ENCODE measurements at regions of chr2 and their contacts with region 1.

Region 1: GRCh38 chr2:222797261-222797660 is 63.6 kb upstream of the ACSL3 start:
- DNase-seq: no peak
- H3K4me3 ChIP-seq: no peak overlapping the region
- H3K4me3 Mint-ChIP-seq: no peak overlapping the region
- H3K27ac ChIP-seq: peak overlapping the region in 1 of 2 donors; percentile 82
- H3K27ac Mint-ChIP-seq: peak overlapping the region in 6 of 7 donors; percentile 63 to 97 (median 84)
- H3K4me1 ChIP-seq: peaks cover 21 to 30% of the 10 kb centered on the region in 2 donors
- H3K4me1 Mint-ChIP-seq: peaks cover 27% of the 10 kb centered on the region
- H3K27me3 ChIP-seq: no peaks in the 10 kb centered on the region
- H3K27me3 Mint-ChIP-seq: peaks cover 0 to 1% (median 0%) of the 10 kb centered on the region in 3 donors
- CTCF ChIP-seq: peak; percentile 32

Region 2: GRCh38 chr2:222641336-222641735 is 155.9 kb before region 1 on chr2:
- intact Hi-C with region 1: no loop called
- DNase-seq: no peak
- H3K4me3 ChIP-seq: no peak overlapping the region
- H3K4me3 Mint-ChIP-seq: no peak overlapping the region
- H3K27ac ChIP-seq: no peak overlapping the region
- H3K27ac Mint-ChIP-seq: peak overlapping the region in 1 of 7 donors; percentile 30
- H3K4me1 ChIP-seq: no peaks in the 10 kb centered on the region
- H3K4me1 Mint-ChIP-seq: peaks cover 3% of the 10 kb centered on the region
- H3K27me3 ChIP-seq: no peaks in the 10 kb centered on the region
- H3K27me3 Mint-ChIP-seq: no peaks in the 10 kb centered on the region
- CTCF ChIP-seq: no peak

Region 3: DNA sequence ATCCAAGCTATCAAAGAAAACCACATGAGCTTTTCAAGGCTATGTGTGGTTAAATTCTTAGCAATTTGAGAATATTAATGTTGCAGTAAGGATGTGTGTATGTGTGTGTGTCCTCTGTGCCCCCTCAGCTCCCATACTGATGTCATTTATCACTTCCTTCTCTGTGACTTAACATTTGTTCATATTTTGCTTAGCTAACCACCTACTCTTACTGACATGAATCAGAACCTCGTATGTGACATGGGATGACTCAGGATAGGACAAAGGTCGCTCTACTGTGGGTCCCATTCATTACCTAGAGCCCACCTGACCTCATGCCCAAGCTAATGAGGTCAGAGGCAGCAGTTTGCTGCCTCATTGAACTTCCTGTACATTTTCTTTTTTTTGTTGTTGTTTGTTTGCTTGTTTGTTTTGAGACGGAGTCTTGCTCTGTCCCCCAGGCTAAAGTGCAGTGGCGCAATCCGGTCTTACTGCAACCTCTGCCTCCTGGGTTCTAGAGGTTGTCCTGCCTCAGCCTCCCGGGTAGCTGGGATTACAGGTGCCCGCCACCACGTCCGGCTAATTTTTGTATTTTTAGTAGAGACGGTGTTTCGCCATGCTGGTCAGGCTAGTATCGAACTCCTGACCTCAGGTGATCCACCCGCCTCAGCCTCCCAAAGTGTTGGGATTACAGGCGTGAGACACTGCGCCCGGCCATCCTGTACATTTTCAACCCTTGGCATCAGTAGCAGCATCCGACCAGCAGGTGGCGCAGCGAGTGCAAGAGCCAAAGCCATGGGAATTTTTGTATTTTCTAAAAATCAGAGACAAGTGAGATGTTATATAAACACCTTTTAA is 89.4 kb before region 1 on chr2:
- intact Hi-C with region 1: loop called (anchors 5 to 10 kb)
- DNase-seq: peak; percentile 81 to 96 (median 87)
- H3K4me3 ChIP-seq: no peak overlapping the region
- H3K4me3 Mint-ChIP-seq: peak overlapping the region; percentile 39 to 62
- H3K27ac ChIP-seq: peak overlapping the region in 1 of 2 donors; percentile 29
- H3K27ac Mint-ChIP-seq: peak overlapping the region; percentile 23 to 92 (median 91)
- H3K4me1 ChIP-seq: peaks cover 19 to 21% of the 10 kb centered on the region in 2 donors
- H3K4me1 Mint-ChIP-seq: peaks cover 35% of the 10 kb centered on the region
- H3K27me3 ChIP-seq: no peaks in the 10 kb centered on the region
- H3K27me3 Mint-ChIP-seq: peaks cover under 1 to 1% (median under 1%) of the 10 kb centered on the region in 3 donors
- CTCF ChIP-seq: peak; percentile 93

Region 4: GRCh38 chr2:222730366-222730999 is 66.8 kb before region 1 on chr2:
- intact Hi-C with region 1: loop called in 1 of 2 experiments (anchors 10 kb)
- DNase-seq: peak; percentile 34 to 55 (median 35)
- H3K4me3 ChIP-seq: peak overlapping the region in 1 of 3 experiments; percentile 7
- H3K4me3 Mint-ChIP-seq: peak overlapping the region in 1 of 2 donors; percentile 69
- H3K27ac ChIP-seq: peak overlapping the region; percentile 48 to 69
- H3K27ac Mint-ChIP-seq: peak overlapping the region in 6 of 7 donors; percentile 21 to 82 (median 68)
- H3K4me1 ChIP-seq: peaks cover 16 to 27% of the 10 kb centered on the region in 2 donors
- H3K4me1 Mint-ChIP-seq: peaks cover 25% of the 10 kb centered on the region
- H3K27me3 ChIP-seq: no peaks in the 10 kb centered on the region
- H3K27me3 Mint-ChIP-seq: peaks cover 0 to 3% (median 0%) of the 10 kb centered on the region in 3 donors
- CTCF ChIP-seq: no peak

Region 5: GRCh38 chr2:222753251-222753824 is 43.9 kb before region 1 on chr2:
- intact Hi-C with region 1: no loop called
- DNase-seq: no peak
- H3K4me3 ChIP-seq: no peak overlapping the region
- H3K4me3 Mint-ChIP-seq: no peak overlapping the region
- H3K27ac ChIP-seq: no peak overlapping the region
- H3K27ac Mint-ChIP-seq: no peak overlapping the region
- H3K4me1 ChIP-seq: peaks cover 0 to 10% of the 10 kb centered on the region in 2 donors
- H3K4me1 Mint-ChIP-seq: peaks cover 8% of the 10 kb centered on the region
- H3K27me3 ChIP-seq: no peaks in the 10 kb centered on the region
- H3K27me3 Mint-ChIP-seq: peaks cover 0 to 2% (median 1%) of the 10 kb centered on the region in 3 donors
- CTCF ChIP-seq: no peak

Region 6: DNA sequence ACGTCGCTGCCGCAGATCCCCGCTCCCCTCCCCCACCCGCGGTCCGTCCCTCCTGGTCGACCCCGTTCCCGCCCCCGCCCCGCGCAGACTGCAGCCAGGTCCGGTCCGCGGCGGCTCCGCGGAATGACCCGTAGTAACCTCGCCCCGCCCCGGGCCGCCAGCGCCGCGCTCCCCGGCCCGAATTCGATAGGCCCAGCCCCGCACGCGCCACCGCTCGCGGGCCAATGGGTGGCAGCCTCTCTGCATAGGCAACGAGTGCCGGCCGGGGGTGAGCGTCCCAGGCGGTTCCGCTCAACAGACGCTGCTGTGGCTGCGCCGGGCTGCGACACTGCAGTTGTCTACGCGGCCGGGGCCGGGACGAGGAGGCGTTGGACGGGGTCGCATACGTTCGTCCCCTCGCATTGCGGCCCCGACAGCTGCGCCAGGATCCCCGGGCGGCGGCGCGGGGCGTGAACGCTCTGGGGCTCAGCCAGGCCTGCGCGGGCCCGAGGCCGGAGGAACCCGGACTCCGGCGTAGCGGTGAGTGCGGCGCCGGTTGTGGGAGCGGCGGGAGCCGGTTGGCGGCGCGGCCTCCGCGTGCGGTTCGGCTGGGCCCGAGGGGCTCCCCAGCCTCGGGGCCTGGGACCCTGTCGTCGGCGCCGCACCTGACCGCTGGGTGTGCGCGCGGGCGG is 63.6 kb after region 1 on chr2 and contains the start of gene ACSL3:
- intact Hi-C with region 1: loop called in 1 of 2 experiments (anchors 10 kb)
- DNase-seq: peak; percentile 89 to 94 (median 91)
- H3K4me3 ChIP-seq: peak within 1 kb of the TSS; percentile 75 to 96 (median 80)
- H3K4me3 Mint-ChIP-seq: peak within 1 kb of the TSS in 1 of 2 donors; percentile 75
- H3K27ac ChIP-seq: peak within 1 kb of the TSS; percentile 53 to 85
- H3K27ac Mint-ChIP-seq: peak within 1 kb of the TSS; percentile 76 to 96 (median 83)
- H3K4me1 ChIP-seq: peaks cover 29 to 31% of the 10 kb centered on the region in 2 donors
- H3K4me1 Mint-ChIP-seq: peaks cover 13% of the 10 kb centered on the region
- H3K27me3 ChIP-seq: no peaks in the 10 kb centered on the region
- H3K27me3 Mint-ChIP-seq: peaks cover 0 to 3% (median 0%) of the 10 kb centered on the region in 3 donors
- CTCF ChIP-seq: peak; percentile 12
- polyA plus RNA-seq, gene ACSL3: 8.8 to 24.4 (median 19.9) TPM

Region 7: GRCh38 chr2:222912117-222912516 is 114.9 kb after region 1 on chr2:
- intact Hi-C with region 1: loop called in 1 of 2 experiments (anchors 10 kb)
- DNase-seq: peak; percentile 79 to 86 (median 80)
- H3K4me3 ChIP-seq: peak overlapping the region in 1 of 3 experiments; percentile 53
- H3K4me3 Mint-ChIP-seq: peak overlapping the region; percentile 59 to 69
- H3K27ac ChIP-seq: peak overlapping the region in 1 of 2 donors; percentile 82
- H3K27ac Mint-ChIP-seq: peak overlapping the region; percentile 78 to 93 (median 90)
- H3K4me1 ChIP-seq: peaks cover 20 to 30% of the 10 kb centered on the region in 2 donors
- H3K4me1 Mint-ChIP-seq: peaks cover 40% of the 10 kb centered on the region
- H3K27me3 ChIP-seq: no peaks in the 10 kb centered on the region
- H3K27me3 Mint-ChIP-seq: no peaks in the 10 kb centered on the region
- CTCF ChIP-seq: no peak